Gastrocnemius medialis (tissue), 4 donors: ENCODE measurements at regions of chr1 and their contacts with region 1.

Region 1: GRCh38 chr1:204162231-204163074 is 3.7 kb downstream of the REN start:
- DNase-seq: peak; percentile 30 to 64
- ATAC-seq: peak; percentile 76 to 81
- H3K4me3 ChIP-seq: no peak overlapping the region
- H3K27ac ChIP-seq: no peak overlapping the region
- H3K4me1 ChIP-seq: peaks cover 0 to 3% of the 10 kb centered on the region in 2 donors
- H3K27me3 ChIP-seq: peaks cover 0 to 3% (median 0%) of the 10 kb centered on the region in 3 donors
- CTCF ChIP-seq: peak; percentile 95 to 100 (median 98)
- POLR2A ChIP-seq: no peak

Region 2: DNA sequence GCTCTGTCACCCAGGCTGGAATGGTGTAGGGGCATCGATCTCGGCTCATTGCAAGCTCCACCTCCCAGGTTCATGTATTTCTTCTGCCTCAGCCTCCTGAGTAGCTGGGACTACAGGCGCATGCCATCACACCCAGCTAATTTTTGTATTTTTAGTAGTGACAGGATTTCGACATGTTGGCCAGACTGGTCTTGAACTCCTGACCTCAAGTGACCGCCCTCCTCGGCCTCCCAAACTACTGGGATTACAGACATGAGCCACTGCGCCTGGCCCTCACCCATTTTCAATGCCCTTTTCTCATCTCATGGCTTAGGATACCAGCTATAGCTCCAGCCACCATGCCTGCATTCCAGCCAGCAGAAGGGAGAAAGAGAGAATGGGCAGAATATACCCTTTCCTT is 102.5 kb before region 1 on chr1:
- in situ Hi-C with region 1: no loop called
- intact Hi-C with region 1: no loop called
- DNase-seq: peak in 1 of 2 donors; percentile 28
- ATAC-seq: peak in 1 of 2 donors; percentile 53
- H3K4me3 ChIP-seq: no peak overlapping the region
- H3K27ac ChIP-seq: no peak overlapping the region
- H3K4me1 ChIP-seq: no peaks in the 10 kb centered on the region
- H3K27me3 ChIP-seq: no peaks in the 10 kb centered on the region
- CTCF ChIP-seq: no peak
- POLR2A ChIP-seq: no peak

Region 3: GRCh38 chr1:204089044-204089751 is 73.3 kb before region 1 on chr1:
- in situ Hi-C with region 1: no loop called
- intact Hi-C with region 1: no loop called
- DNase-seq: peak; percentile 87 to 91
- ATAC-seq: peak; percentile 84
- H3K4me3 ChIP-seq: peak overlapping the region; percentile 34 to 43 (median 41)
- H3K27ac ChIP-seq: peak overlapping the region; percentile 85 to 94 (median 92)
- H3K4me1 ChIP-seq: peaks cover 95 to 99% of the 10 kb centered on the region in 2 donors
- H3K27me3 ChIP-seq: no peaks in the 10 kb centered on the region
- CTCF ChIP-seq: peak in 2 of 5 experiments; percentile 15 to 21
- POLR2A ChIP-seq: peak; percentile 42 to 77

Region 4: DNA sequence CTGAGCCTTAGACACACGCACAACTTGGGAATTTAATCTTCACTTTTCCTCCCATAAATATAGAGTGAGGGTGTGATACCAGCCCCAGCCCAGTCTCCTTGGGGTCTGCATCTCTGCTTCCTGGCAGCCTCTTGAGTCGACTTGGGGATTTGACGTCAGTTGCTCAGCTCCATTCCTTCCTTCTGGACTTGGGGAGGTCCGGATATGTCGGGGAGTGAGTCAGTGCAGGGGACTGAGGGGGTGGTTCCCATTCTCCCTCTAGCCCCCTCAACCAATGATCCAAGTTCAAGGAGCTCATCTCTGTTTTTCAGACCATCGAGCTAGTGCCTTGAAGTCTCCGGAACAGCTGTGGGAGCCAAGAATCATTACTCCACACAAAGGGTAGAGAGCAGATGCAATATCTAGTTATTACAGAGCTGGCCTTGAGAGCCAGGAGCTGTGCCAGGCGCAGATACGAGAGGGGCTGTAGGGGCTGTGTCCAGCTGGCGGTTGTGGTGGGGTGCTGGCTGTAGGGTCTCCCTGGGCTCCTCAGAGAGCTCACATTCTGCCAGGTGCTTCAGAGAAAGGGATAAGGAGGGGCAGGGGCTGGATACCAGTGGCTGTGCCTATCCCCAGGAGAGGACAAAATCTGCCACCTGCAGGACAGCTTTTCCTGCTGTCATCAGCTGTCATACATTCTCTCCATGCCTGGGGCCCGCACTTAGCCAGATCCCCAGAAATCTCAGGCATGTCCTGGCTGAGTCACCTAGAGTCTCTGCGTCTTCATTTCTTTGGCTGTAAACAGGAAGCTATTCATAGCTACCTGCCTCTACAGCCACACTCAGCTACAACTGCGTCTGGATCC is 35.9 kb after region 1 on chr1:
- in situ Hi-C with region 1: loop called in 1 of 4 experiments (anchors 5 kb)
- intact Hi-C with region 1: loop called (anchors 2 kb)
- DNase-seq: peak; percentile 22 to 51
- ATAC-seq: peak; percentile 85 to 94
- H3K4me3 ChIP-seq: peak overlapping the region in 2 of 4 donors; percentile 20 to 31
- H3K27ac ChIP-seq: peak overlapping the region in 3 of 4 donors; percentile 32 to 90 (median 48)
- H3K4me1 ChIP-seq: peaks cover 16 to 26% of the 10 kb centered on the region in 2 donors
- H3K27me3 ChIP-seq: peaks cover 0 to 8% (median 0%) of the 10 kb centered on the region in 3 donors
- CTCF ChIP-seq: no peak
- POLR2A ChIP-seq: no peak

Region 5: GRCh38 chr1:204207136-204207616 is 44.7 kb after region 1 on chr1:
- in situ Hi-C with region 1: loop called in 3 of 4 experiments (anchors 5 kb)
- intact Hi-C with region 1: loop called (anchors 1 kb)
- DNase-seq: peak; percentile 34 to 37
- ATAC-seq: peak; percentile 74 to 75
- H3K4me3 ChIP-seq: no peak overlapping the region
- H3K27ac ChIP-seq: no peak overlapping the region
- H3K4me1 ChIP-seq: no peaks in the 10 kb centered on the region
- H3K27me3 ChIP-seq: peaks cover 0 to 6% (median 3%) of the 10 kb centered on the region in 3 donors
- CTCF ChIP-seq: peak; percentile 61 to 91 (median 88)
- POLR2A ChIP-seq: no peak

Region 6: GRCh38 chr1:204516180-204516879 is 353.9 kb after region 1 on chr1 and contains the start of gene MDM4:
- in situ Hi-C with region 1: loop called in 1 of 4 experiments (anchors 25 kb)
- intact Hi-C with region 1: no loop called
- DNase-seq: peak; percentile 88 to 93
- ATAC-seq: peak; percentile 98 to 99
- H3K4me3 ChIP-seq: peak within 1 kb of the TSS; percentile 76 to 95 (median 82)
- H3K27ac ChIP-seq: peak within 1 kb of the TSS; percentile 89 to 97 (median 96)
- H3K4me1 ChIP-seq: peaks cover 33 to 34% of the 10 kb centered on the region in 2 donors
- H3K27me3 ChIP-seq: no peaks in the 10 kb centered on the region
- CTCF ChIP-seq: no peak
- POLR2A ChIP-seq: peak; percentile 64 to 78
- total RNA-seq, gene MDM4: 15.1 to 44.0 (median 28.9) TPM